ENCODE measurements at regions of chr1 and their contacts with region 1.

Region 1: DNA sequence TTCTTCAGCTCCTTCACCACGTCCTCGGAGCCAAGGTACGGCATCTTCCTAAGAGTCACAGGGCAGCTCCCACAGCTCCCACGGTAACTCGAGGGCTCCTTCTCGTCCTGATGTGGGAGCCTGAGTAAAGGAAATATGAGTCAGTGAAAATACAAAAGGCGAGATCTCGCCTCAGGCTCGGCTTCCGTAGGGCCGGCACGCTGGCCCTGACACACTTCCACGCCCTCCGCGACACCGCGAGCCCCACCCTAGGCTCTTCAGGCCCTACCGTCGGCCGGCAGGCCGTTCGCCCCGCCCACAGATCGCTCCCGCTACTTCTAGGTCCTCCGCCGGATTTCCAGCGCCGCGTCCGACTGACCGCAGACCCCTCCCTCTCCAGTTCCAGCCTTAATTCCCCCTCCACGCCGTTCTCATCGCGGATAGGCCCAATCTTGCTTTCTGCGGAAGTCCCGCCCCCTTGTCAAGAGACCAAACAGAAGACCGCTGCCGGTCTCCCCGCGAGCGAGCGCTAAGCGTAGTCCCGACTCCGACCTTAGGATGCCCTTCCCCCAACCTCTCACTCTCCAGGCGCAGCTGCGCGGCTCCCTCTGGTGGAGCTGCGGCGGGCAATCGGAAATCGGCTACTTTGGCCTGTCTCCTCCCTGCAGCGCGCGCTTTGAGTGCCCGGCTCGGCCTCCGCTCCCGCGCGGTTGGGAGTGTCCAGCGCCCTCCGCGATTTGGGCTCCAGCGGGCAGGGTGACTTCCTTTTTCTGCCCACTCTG is at the starts of genes AP4B1 and DCLRE1B:
- H3K4me3 ChIP-seq: peak within 1 kb of the TSS; percentile 69
- H3K27ac ChIP-seq: peak within 1 kb of the TSS; percentile 75
- H3K4me1 ChIP-seq: no peaks in the 10 kb centered on the region
- CTCF ChIP-seq: peak; percentile 99

Region 2: DNA sequence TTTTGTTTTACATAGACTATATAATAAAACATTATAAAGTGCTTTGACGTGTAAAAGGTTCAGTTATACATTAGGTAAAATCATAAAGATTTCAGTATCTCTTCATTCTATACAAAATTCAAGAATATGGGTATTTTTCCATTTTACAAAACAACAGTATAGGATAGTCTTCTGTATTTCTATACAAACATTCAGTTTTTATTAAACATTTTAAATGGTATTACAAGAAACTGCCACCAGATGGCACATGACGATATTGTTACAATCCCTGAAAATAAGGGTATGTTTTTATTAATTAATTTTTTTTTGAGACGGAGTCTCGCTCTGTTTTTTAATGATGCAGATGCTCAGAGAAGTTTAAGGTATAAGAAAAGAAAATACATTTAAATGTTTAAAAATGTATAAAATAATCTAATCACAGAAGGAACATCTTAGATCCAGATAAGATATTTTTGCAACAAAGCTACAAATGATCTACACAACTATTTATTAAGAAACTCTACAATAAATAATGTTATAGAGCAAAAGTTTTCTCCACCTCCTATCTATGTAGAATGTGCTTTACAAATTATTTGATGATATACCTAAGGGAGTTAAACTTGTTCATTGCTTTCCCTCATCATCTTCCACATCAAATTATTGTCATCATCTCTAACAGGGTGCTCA is 69.1 kb before region 1 on chr1:
- CTCF ChIA-PET with region 1: interaction called, 17 read pairs
- POLR2A ChIA-PET with region 1: interaction called, 3 read pairs
- H3K4me3 ChIP-seq: no peak overlapping the region
- H3K27ac ChIP-seq: no peak overlapping the region
- H3K4me1 ChIP-seq: no peaks in the 10 kb centered on the region
- CTCF ChIP-seq: no peak